Dendritic cell treated with granulocyte-macrophage colony-stimulating factor and Interleukin-4, amounts not matched to agents 40 ng/mL and 50 ng/mL, for 4 days (primary cell): ENCODE measurements at regions of chr7 and their contacts with region 1.

Region 1: DNA sequence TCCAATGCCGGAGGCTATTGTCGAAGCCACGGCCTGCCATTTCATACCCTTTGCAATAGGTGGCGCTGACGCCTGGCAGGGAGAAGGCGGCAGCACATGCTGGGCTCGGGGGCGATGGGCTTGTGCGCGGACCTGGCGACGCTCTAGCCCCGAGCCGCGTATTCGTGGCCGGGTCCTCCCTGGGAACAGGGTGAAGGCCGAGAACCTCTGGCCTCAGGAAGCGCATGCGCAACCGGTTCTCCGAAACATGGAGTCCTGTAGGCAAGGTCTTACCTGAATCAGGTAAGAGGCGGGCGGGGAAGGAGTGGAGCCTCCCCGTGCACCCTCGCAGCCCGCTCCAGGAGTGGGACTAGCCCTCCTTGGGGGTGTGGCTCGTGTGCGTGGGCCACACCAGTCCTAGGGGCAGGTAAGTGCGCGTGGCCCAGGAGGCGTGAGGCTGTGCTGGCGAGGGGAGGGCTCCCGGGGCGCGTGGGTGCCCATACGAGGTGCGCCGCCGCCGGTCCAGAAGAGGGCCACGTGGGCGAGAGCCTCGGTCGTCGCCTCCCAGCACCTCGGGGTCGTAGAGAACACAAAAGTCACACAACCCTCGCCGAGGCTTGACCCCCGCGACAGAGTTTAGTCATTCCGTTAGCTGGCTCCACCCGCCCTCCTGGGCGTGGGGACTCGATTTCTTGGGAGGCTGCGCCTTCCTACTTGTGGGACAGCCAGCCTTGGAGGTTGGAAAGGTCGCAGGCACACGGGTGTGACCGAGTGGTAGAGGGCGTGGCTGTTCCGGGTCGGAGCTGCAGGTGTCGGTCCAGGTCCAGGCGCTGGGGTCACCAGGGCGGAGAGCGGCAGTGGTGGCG is 5.5 kb upstream of the MEST start:
- H3K4me3 Mint-ChIP-seq: peak overlapping the region; percentile 81
- H3K27ac Mint-ChIP-seq: peak overlapping the region; percentile 67
- H3K4me1 Mint-ChIP-seq: peaks cover 46% of the 10 kb centered on the region
- H3K27me3 Mint-ChIP-seq: peaks cover 55% of the 10 kb centered on the region

Region 2: DNA sequence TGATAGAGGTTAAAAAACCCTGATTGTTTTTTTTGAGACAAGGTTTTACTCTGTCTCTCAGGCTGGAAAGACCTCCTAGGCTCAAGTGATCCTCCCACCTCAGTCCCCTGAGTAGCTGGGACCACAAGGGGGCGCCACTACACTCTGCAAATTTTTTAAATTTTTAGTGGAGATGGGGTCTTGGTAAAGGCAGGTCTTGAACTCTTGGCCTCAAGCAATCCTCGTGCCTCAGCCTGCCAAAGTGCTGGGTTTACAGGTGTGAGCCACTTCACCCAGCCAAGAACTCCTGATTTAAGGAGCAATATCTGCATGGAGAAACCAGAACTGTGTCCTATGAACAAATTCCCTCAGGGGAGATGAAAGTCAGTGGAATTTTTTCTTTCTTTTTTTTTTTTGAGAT is 423.3 kb before region 1 on chr7:
- intact Hi-C with region 1: loop called (anchors 5 kb)
- H3K4me3 Mint-ChIP-seq: no peak overlapping the region
- H3K27ac Mint-ChIP-seq: no peak overlapping the region
- H3K4me1 Mint-ChIP-seq: no peaks in the 10 kb centered on the region
- H3K27me3 Mint-ChIP-seq: peaks cover 3% of the 10 kb centered on the region

Region 3: DNA sequence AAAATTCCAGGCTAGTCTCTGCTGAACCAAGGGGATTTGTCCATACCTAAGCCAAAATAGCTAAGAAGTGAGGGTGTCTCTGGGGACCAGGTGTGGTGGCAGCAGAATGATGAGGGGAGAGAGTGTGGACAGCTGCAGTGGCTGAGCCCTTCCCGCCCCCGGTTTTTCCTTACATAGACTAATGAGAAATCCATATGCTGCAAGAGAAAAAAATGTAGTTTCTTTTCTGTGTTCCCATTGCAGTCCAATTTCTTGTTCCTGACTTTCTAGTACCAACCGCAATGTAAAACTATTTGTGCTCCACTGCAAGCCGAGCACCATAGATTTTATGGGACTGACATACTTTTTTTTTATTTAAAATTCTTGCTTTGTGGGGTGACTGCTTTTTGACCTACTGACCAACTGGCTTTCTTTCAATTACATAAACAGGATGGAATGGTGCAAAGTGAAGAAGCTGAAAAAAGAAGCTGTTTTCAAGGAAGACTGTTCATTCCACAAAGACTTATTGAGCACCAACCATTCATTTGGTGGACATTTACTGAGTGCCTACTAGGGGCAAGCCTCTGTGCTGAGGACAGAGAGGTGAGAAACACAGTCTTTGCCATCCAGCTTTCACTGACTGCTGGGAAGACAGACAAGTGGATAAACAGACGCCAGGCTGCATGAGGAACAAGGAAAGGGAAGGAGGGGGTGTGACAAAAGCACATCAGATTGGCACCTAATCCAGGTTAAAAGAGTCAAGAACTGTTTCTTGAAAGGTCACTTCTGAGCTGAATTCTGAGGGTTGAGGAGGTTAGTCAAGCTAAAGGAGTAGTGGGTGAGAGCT is 55.3 kb before region 1 on chr7:
- intact Hi-C with region 1: loop called (anchors 10 kb)
- H3K4me3 Mint-ChIP-seq: no peak overlapping the region
- H3K27ac Mint-ChIP-seq: no peak overlapping the region
- H3K4me1 Mint-ChIP-seq: peaks cover 13% of the 10 kb centered on the region
- H3K27me3 Mint-ChIP-seq: no peaks in the 10 kb centered on the region

Region 4: GRCh38 chr7:130721486-130722280 is 235.3 kb after region 1 on chr7:
- intact Hi-C with region 1: no loop called
- H3K4me3 Mint-ChIP-seq: no peak overlapping the region
- H3K27ac Mint-ChIP-seq: no peak overlapping the region
- H3K4me1 Mint-ChIP-seq: no peaks in the 10 kb centered on the region
- H3K27me3 Mint-ChIP-seq: peaks cover 26% of the 10 kb centered on the region